Caco-2 (cell line): ENCODE measurements at regions of chrX and their contacts with region 1.

Region 1: GRCh38 chrX:51336584-51336983 is 4.0 kb downstream of the NUDT10 start:
- DNase-seq: peak; percentile 19 to 27
- H3K4me3 ChIP-seq: no peak overlapping the region
- H3K4me3 Mint-ChIP-seq: no peak overlapping the region
- H3K27ac Mint-ChIP-seq: no peak overlapping the region
- H3K4me1 ChIP-seq: no peaks in the 10 kb centered on the region
- H3K4me1 Mint-ChIP-seq: no peaks in the 10 kb centered on the region
- H3K27me3 ChIP-seq: no peaks in the 10 kb centered on the region
- H3K27me3 Mint-ChIP-seq: peaks cover 7% of the 10 kb centered on the region
- CTCF ChIP-seq: peak; percentile 11 to 43

Region 2: DNA sequence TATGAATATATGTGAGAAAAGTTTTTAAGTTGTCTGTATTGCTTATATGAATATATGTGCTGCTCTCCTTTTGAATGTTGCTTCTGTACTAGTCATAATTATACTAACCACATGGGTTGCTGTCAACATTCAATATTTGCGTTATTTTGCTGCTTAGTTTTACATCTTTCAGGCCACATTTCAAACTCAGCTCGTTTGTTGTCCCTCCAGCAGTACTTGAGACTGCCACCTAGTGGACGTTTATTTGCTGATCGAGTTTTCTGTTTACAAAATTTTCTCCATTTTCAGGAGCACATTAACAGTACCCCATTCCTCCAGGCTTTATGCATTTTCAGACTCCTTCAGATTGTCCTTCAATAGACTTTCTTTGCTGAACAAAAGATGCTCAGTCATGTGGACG is 84.0 kb after region 1 on chrX:
- CTCF ChIA-PET with region 1: interaction called, 17 read pairs
- POLR2A ChIA-PET with region 1: no interaction called
- intact Hi-C with region 1: loop called (anchors 1 kb)
- DNase-seq: peak in 1 of 2 experiments; percentile 26
- H3K4me3 ChIP-seq: no peak overlapping the region
- H3K4me3 Mint-ChIP-seq: no peak overlapping the region
- H3K27ac Mint-ChIP-seq: no peak overlapping the region
- H3K4me1 ChIP-seq: no peaks in the 10 kb centered on the region
- H3K4me1 Mint-ChIP-seq: no peaks in the 10 kb centered on the region
- H3K27me3 ChIP-seq: no peaks in the 10 kb centered on the region
- H3K27me3 Mint-ChIP-seq: no peaks in the 10 kb centered on the region
- CTCF ChIP-seq: peak; percentile 39 to 61

Region 3: DNA sequence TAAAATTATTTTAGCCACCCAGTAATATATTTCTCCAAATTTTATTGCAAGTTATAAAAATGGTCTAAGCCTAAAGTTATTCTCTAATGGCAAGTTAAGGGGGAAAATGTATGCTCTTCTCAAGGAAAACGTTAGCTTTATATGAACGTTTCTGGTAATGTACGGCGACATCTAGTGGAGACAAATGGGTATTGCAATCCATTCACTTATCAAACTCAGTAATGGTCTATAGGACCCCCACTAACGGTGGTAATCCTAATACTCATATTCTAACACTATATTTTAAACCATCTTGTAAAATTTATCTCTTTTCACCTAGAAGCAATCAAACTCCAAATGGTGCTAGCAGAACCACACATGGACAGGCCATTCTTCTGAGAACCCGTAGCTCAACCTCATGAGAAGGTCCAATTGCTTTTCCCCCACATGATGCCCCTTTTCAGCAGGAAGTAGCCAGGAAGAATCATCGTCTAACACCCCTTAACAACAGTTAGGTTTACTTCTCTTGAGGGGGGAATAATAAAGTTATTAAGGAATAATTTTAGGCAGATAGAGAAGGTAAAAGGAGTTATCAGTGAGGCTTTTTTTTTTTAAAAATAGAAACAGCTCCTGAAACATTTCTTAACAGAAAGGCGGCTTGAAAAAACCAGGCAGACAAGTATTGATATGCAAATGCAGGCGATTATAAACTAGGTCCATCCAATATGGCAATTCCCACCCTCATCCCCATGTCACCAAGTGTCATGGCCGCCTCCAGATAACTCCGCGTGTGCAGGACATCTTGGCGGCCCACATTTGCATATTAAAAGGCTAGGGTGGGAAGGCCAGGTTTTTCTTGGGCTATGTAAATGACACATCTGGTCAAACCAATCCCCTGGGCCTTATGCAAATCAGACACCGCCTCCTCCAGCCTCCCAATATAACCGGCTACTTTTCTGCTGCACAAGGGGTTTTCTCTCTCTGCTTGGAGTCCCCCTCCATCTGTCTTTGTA is 124.8 kb after region 1 on chrX:
- CTCF ChIA-PET with region 1: interaction called, 13 read pairs
- POLR2A ChIA-PET with region 1: no interaction called
- intact Hi-C with region 1: loop called (anchors 2 kb)
- DNase-seq: peak in 1 of 2 experiments; percentile 7
- H3K4me3 ChIP-seq: no peak overlapping the region
- H3K4me3 Mint-ChIP-seq: no peak overlapping the region
- H3K27ac Mint-ChIP-seq: no peak overlapping the region
- H3K4me1 ChIP-seq: no peaks in the 10 kb centered on the region
- H3K4me1 Mint-ChIP-seq: no peaks in the 10 kb centered on the region
- H3K27me3 ChIP-seq: no peaks in the 10 kb centered on the region
- H3K27me3 Mint-ChIP-seq: no peaks in the 10 kb centered on the region
- CTCF ChIP-seq: peak; percentile 49 to 53